Astrocyte of the cerebellum (primary cell): ENCODE measurements at regions of chr20 and their contacts with region 1.

Region 1: DNA sequence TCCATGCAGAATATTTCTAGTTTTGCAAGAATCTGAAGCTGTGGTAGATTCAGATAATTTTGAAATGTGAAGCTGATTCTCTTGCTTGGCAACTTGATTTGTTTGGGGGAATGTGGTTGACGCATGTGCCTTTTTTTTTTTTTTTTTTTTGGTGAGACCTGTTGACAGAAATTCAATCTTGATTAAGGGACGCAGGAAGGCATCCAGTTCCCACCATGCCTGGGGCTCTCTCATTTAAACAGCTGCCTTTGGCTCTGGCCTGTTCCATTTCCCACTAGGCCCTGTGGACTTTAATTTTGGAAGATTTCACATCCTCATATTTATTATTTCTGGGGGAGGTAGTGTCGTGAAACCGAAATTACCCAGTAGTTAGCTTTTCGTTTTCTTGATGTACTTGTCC is 8.6 kb downstream of the TPX2 start:
- DNase-seq: no peak
- H3K4me3 ChIP-seq: no peak overlapping the region
- CTCF ChIP-seq: no peak

Region 2: GRCh38 chr20:31674895-31675827 is 72.5 kb before region 1 on chr20:
- in situ Hi-C with region 1: no loop called
- DNase-seq: peak; percentile 72
- H3K4me3 ChIP-seq: no peak overlapping the region
- CTCF ChIP-seq: no peak

Region 3: DNA sequence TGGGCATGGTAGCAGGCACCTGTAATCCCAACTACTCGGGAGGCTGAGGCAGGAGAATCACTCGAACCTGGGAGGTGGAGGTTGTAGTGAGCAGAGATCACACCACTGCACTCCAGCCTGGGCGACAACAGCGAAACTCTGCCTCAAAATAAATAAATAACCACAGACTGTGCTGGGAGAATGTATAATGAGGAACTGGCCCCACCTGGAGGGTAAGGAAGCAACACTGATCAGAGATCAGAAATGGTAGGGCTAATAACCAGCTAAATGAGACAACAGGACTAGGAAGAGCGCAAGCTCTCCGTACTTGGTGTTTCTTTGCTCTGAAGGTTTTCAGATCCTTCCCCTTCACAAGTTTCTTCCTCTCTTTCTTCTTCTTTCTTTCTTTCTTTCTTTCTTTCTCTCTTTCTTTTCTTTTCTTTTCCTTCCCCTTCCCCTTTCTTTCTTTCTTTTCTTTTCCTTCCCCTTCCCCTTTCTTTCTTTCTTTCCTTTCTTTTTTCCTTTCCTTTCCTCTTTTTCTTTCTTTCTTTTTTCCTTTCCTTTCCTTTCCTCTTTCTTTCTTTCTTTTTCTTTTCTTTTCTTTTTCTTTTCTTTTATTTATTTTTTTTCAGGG is 277.1 kb after region 1 on chr20:
- in situ Hi-C with region 1: loop called (anchors 5 kb)
- DNase-seq: no peak
- H3K4me3 ChIP-seq: no peak overlapping the region
- CTCF ChIP-seq: no peak